CD8-positive, alpha-beta T cell (primary cell): ENCODE measurements at regions of chr18 and their contacts with region 1.

Region 1: GRCh38 chr18:50967714-50968661 is at the start of gene ELAC1:
- DNase-seq: peak; percentile 37 to 85 (median 64)
- ATAC-seq: peak; percentile 85
- H3K4me3 ChIP-seq: peak within 1 kb of the TSS; percentile 67 to 71
- H3K4me3 Mint-ChIP-seq: peak within 1 kb of the TSS; percentile 94
- H3K27ac ChIP-seq: peak within 1 kb of the TSS; percentile 86 to 89
- H3K27ac Mint-ChIP-seq: peak within 1 kb of the TSS; percentile 96
- H3K4me1 ChIP-seq: peaks cover 15% of the 10 kb centered on the region
- H3K4me1 Mint-ChIP-seq: peaks cover 28% of the 10 kb centered on the region
- H3K27me3 ChIP-seq: no peaks in the 10 kb centered on the region
- H3K27me3 Mint-ChIP-seq: no peaks in the 10 kb centered on the region
- CTCF ChIP-seq: no peak
- total RNA-seq, gene ELAC1: 3.5 to 4.0 TPM

Region 2: DNA sequence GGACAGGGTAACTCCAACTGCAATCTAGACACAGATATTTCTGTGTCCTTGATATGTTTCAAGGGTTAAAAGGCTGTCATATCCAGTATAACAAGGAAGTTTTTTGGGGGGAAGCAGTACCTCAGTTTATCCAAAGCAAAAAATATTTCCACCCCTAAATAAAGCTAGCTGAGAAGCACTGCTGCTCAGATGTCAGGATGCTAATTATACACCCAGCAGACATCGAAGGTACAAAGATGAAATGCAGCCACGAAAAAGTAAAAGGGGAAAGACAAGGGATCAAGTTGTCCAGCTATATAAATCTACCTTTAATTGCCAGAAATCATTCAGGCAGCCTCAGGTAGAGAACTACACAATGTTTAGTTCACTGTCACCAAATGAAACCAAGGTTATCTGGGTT is 26.0 kb after region 1 on chr18:
- CTCF ChIA-PET with region 1: no interaction called
- POLR2A ChIA-PET with region 1: no interaction called
- intact Hi-C with region 1: no loop called
- DNase-seq: no peak
- ATAC-seq: no peak
- H3K4me3 ChIP-seq: no peak overlapping the region
- H3K4me3 Mint-ChIP-seq: no peak overlapping the region
- H3K27ac ChIP-seq: no peak overlapping the region
- H3K27ac Mint-ChIP-seq: no peak overlapping the region
- H3K4me1 ChIP-seq: no peaks in the 10 kb centered on the region
- H3K4me1 Mint-ChIP-seq: no peaks in the 10 kb centered on the region
- H3K27me3 ChIP-seq: no peaks in the 10 kb centered on the region
- H3K27me3 Mint-ChIP-seq: no peaks in the 10 kb centered on the region
- CTCF ChIP-seq: no peak

Region 3: DNA sequence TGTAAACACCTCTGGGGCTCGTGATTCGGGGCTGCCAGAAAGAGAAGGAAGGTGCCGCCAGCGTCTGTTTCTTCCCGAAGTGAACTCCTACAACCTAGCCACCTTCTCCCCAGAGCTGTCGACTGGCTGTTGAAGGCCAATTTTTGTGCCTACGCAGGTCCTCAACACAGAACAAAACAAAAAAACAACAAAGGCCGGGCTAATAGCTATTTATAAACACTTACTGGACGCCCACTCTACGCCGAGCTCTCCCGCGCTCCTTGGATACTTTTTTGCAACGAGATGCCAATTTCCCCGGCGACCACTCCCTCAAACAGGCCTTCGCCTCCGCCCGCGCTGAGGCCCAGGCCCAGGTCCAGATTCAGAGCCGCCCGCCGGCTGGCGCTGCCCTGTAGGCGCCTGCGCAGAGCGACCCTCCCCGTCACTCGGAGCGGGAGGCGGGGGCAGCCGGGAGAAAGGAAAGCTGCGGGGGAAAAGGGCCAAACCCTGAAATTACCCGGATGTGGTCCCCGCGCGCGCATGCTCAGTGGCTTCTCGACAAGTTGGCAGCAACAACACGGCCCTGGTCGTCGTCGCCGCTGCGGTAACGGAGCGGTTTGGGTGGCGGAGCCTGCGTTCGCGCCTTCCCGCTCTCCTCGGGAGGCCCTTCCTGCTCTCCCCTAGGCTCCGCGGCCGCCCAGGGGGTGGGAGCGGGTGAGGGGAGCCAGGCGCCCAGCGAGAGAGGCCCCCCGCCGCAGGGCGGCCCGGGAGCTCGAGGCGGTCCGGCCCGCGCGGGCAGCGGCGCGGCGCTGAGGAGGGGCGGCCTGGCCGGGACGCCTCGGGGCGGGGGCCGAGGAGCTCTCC is 61.9 kb after region 1 on chr18 and contains the start of gene SMAD4:
- CTCF ChIA-PET with region 1: interaction called, 5 read pairs
- POLR2A ChIA-PET with region 1: interaction called, 56 read pairs
- intact Hi-C with region 1: loop called (anchors 1 kb)
- DNase-seq: peak; percentile 94 to 99 (median 98)
- ATAC-seq: peak; percentile 83
- H3K4me3 ChIP-seq: peak within 1 kb of the TSS; percentile 74 to 80
- H3K4me3 Mint-ChIP-seq: peak within 1 kb of the TSS; percentile 97
- H3K27ac ChIP-seq: peak within 1 kb of the TSS; percentile 81 to 91
- H3K27ac Mint-ChIP-seq: peak within 1 kb of the TSS; percentile 99
- H3K4me1 ChIP-seq: peaks cover 41% of the 10 kb centered on the region
- H3K4me1 Mint-ChIP-seq: peaks cover 65% of the 10 kb centered on the region
- H3K27me3 ChIP-seq: no peaks in the 10 kb centered on the region
- H3K27me3 Mint-ChIP-seq: no peaks in the 10 kb centered on the region
- CTCF ChIP-seq: no peak
- total RNA-seq, gene SMAD4: 80.4 to 86.5 TPM

Region 4: GRCh38 chr18:51110073-51110803 is 142.2 kb after region 1 on chr18:
- CTCF ChIA-PET with region 1: no interaction called
- POLR2A ChIA-PET with region 1: no interaction called
- intact Hi-C with region 1: no loop called
- DNase-seq: peak; percentile 40 to 81 (median 64)
- ATAC-seq: peak; percentile 72
- H3K4me3 ChIP-seq: no peak overlapping the region
- H3K4me3 Mint-ChIP-seq: no peak overlapping the region
- H3K27ac ChIP-seq: no peak overlapping the region
- H3K27ac Mint-ChIP-seq: no peak overlapping the region
- H3K4me1 ChIP-seq: peaks cover 7% of the 10 kb centered on the region
- H3K4me1 Mint-ChIP-seq: peaks cover 10% of the 10 kb centered on the region
- H3K27me3 ChIP-seq: no peaks in the 10 kb centered on the region
- H3K27me3 Mint-ChIP-seq: no peaks in the 10 kb centered on the region
- CTCF ChIP-seq: peak; percentile 91

Region 5: GRCh38 chr18:51651761-51652160 is 683.8 kb after region 1 on chr18:
- CTCF ChIA-PET with region 1: no interaction called
- POLR2A ChIA-PET with region 1: no interaction called
- intact Hi-C with region 1: no loop called
- DNase-seq: no peak
- ATAC-seq: no peak
- H3K4me3 ChIP-seq: no peak overlapping the region
- H3K4me3 Mint-ChIP-seq: no peak overlapping the region
- H3K27ac ChIP-seq: no peak overlapping the region
- H3K27ac Mint-ChIP-seq: no peak overlapping the region
- H3K4me1 ChIP-seq: no peaks in the 10 kb centered on the region
- H3K4me1 Mint-ChIP-seq: no peaks in the 10 kb centered on the region
- H3K27me3 ChIP-seq: no peaks in the 10 kb centered on the region
- H3K27me3 Mint-ChIP-seq: peaks cover 6% of the 10 kb centered on the region
- CTCF ChIP-seq: no peak